Endothelial cell of umbilical vein (primary cell): ENCODE measurements at regions of chr6 and their contacts with region 1.

Region 1: DNA sequence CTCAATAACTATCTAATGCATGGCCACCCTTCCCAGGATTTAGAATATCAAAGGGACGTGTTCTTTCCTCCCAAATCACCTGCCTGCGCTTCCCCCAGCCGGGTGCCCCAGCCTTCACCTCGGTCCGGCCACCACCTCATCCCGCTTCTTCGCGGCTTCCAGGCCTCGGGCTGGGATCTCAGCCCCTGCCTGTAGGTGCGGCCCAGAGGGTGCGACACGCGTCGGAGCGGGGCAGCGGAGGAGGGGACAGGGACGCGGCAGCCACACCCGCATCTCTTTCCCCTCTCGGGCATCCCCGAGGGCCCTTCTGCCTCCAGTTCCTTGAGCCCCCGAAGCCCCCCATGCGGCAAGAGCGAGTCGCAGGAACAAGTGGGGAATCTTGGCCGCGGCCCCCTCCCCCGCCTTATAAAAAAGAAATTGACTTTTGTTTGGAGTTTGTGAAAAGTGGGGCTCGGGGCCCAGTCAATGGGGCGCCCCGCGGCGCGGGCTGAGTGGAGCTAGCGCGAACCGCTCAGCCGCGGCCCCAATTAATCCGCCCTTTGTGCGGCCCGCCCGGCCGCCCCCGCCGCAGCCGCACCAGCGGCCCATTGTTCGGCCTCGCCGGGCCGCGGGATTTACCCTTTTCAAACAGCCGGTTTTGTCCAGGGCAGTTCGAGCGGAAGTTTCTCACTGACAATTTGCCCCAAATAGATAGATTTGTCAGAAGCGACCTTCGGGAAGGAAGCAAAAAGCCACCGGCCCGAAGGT is 8.4 kb upstream of the NR2E1 start:
- DNase-seq: no peak
- H3K4me3 ChIP-seq: no peak overlapping the region
- H3K27ac ChIP-seq: no peak overlapping the region
- H3K4me1 ChIP-seq: no peaks in the 10 kb centered on the region
- H3K27me3 ChIP-seq: peaks cover 70 to 84% of the 10 kb centered on the region in 2 experiments
- CTCF ChIP-seq: no peak
- POLR2A ChIP-seq: no peak

Region 2: DNA sequence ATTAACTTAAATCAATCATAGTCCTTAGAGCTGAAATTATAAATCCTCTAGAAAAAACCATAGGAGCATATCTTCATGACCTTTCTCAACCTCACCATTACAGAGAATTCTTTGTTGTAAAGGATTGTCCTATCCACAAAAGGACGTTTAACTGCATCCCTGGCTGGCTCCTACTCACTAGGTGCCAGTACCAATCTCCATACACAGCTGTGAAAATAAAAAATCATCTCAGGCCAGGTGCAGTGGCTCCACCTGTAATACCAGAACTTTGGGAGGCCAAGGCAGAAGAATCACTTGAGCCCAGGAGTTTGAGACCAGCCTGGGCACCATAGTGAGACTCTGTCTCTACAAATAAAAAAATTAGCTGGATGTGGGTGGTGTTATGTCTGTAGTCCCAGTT is 787.9 kb before region 1 on chr6:
- CTCF ChIA-PET with region 1: no interaction called
- POLR2A ChIA-PET with region 1: no interaction called
- dilution Hi-C with region 1: no loop called
- intact Hi-C with region 1: loop called (anchors 5 kb)
- DNase-seq: no peak
- H3K4me3 ChIP-seq: no peak overlapping the region
- H3K27ac ChIP-seq: no peak overlapping the region
- H3K4me1 ChIP-seq: no peaks in the 10 kb centered on the region
- H3K27me3 ChIP-seq: no peaks in the 10 kb centered on the region
- CTCF ChIP-seq: no peak
- POLR2A ChIP-seq: no peak

Region 3: DNA sequence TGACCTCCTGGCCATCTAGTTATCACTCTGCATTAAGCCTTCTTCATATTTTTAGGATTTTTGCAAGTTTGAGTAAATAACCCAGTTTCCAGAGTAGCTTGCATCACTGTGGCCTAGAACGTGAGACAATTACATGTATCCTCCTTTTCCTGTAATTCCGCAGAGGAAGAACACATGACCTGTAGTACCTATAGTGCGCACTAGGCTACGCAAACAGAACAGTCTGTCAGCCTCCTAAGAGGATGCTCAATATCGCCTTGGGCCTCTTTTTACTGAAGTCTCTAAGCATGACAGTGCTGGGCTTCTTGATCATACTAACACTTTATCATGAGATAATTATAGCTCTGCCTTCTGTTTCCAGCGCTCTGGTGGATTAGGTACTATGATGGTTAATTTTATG is 11.8 kb before region 1 on chr6:
- CTCF ChIA-PET with region 1: no interaction called
- POLR2A ChIA-PET with region 1: no interaction called
- dilution Hi-C with region 1: no loop called
- intact Hi-C with region 1: loop called (anchors 1 kb)
- DNase-seq: no peak
- H3K4me3 ChIP-seq: no peak overlapping the region
- H3K27ac ChIP-seq: no peak overlapping the region
- H3K4me1 ChIP-seq: no peaks in the 10 kb centered on the region
- H3K27me3 ChIP-seq: peaks cover 18 to 34% of the 10 kb centered on the region in 2 experiments
- CTCF ChIP-seq: no peak
- POLR2A ChIP-seq: no peak

Region 4: DNA sequence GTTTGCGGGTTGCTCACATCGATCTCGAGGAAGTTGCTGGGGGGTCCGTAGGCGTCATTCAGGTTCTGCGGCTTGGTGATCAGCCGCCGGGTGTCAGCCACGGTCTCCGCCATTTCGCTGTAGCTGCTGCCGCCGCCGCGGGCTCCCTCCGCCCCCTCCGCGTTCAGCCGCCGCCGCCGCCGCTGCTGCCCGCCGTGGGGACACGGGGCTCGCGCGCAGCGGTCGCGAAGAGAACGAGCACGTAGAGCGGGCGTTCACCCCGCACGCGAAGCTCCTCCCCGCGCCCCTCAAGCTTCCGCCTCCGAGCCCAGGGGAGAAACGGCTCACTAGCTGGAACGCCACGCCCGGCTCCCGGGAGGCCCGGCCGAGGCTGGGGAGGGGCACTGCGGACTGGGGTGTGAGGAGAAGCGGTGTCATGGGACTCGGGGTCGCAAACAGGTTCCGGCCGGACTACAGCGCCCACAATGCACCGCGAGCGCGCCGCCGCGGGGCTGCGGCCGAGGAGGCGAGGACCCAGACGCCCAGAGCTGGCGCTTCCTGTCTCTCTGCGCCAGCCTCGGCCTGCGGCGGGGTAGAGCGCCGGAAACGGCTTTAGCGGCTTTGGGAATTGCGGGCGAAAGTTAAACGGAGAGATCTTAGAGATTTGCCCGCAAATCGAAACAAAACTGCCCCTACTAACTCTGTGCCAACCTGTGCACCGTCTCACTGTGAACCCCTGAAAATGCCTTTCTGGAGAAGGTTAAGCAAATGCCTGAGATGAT is 103.6 kb after region 1 on chr6 and contains the start of gene SNX3:
- CTCF ChIA-PET with region 1: no interaction called
- POLR2A ChIA-PET with region 1: no interaction called
- dilution Hi-C with region 1: no loop called
- intact Hi-C with region 1: loop called (anchors 5 kb)
- DNase-seq: peak; percentile 98
- H3K4me3 ChIP-seq: peak within 1 kb of the TSS; percentile 81 to 95 (median 85)
- H3K27ac ChIP-seq: peak within 1 kb of the TSS; percentile 59
- H3K4me1 ChIP-seq: peaks cover 14% of the 10 kb centered on the region
- H3K27me3 ChIP-seq: no peaks in the 10 kb centered on the region
- CTCF ChIP-seq: peak in 1 of 2 donors; percentile 2
- POLR2A ChIP-seq: peak; percentile 63
- total RNA-seq, gene SNX3: 141 and 155 TPM in 2 replicates